CD8-positive, alpha-beta memory T cell (primary cell): ENCODE measurements at regions of chr17 and their contacts with region 1.

Region 1: DNA sequence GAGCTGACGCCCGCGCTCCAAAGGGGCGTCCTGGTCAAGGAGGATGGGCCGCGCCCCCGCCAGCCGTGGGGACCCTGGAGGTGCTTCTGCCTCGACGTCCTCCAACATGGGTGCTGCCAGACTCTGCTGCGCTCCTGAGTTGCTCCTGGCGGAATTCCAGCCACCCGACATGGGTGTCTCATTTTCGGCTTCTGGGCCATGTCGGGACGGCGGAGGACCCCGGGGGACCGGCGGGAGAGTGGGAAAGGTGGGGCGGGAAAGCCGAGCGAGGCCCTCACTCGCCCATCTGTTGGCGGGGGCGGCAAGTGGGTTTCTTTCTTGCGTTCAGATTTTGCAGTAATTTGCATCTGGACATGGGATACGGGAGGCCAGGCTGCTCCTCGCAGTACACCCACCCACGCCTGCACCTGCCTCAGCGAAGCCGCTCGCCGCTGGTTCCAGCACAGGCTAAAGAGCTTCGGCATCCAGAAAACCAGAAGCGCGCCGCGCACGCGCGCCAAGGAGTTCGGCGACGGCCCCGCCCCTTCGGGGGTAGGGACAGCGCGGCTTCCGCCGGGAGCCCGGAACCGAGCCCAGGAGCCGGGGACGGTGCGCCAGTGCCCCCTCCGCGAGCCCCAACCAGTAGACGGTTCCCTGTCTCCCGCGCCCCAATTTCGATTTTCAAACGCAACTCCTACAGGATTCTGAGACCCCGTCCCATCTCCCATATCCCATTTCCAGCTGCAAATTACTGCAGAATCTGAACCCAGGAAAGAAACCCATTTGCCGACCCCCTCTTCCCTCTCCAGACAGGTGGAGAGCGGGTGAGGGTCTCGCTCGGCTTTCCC is at the start of gene ARMC7:
- DNase-seq: peak; percentile 86 to 92 (median 88)
- H3K4me3 ChIP-seq: peak within 1 kb of the TSS; percentile 93
- H3K4me3 Mint-ChIP-seq: peak within 1 kb of the TSS; percentile 87 to 93 (median 91)
- H3K27ac ChIP-seq: peak within 1 kb of the TSS; percentile 59
- H3K27ac Mint-ChIP-seq: peak within 1 kb of the TSS; percentile 81 to 96 (median 91)
- H3K4me1 ChIP-seq: peaks cover 28% of the 10 kb centered on the region
- H3K4me1 Mint-ChIP-seq: peaks cover 29 to 42% (median 36%) of the 10 kb centered on the region in 3 donors
- H3K27me3 ChIP-seq: no peaks in the 10 kb centered on the region
- H3K27me3 Mint-ChIP-seq: no peaks in the 10 kb centered on the region
- total RNA-seq, gene ARMC7: 15.2 to 15.9 TPM

Region 2: DNA sequence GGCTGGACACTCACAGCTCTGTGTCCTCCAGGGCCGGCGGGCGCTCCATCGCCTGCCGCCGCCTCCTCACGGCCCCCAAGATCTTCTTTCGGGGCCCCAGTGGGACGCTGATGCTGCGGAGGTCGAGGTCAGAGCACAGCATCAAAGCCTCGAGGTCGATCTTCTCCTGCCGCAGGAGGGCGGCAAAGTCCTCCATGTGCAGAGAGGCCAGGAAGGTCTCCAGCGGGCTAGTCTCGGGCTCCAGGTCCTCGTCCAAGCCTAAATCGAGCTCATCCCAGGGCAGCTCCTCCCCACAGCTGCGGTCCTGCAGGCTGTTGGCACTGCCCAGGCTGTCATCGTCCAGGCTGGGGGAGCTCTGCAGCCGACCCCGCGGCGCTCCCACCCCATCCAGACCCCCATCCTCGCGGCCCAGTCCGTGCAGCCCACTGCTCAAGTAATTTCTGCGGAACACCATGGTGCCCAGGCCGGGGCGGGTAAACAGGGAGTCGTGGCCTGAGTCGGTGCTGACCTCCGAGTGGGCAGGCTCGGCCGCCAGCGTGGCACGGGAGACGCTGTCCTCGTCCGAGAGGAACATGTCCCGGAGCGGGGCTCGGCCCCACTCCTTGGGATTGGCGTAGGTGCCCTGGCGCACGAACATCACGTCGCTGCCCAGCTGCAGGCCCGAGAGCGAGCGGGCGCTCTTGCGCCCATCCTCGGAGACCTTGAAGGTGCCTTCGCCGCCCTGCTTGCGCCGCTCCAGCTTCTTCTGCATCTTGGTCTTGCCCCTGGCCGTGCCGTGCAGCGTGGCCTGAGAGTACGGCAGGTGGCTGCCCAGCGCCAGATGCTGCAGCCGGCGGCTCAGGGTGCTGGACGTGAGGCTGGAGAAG is 189.9 kb before region 1 on chr17:
- CTCF ChIA-PET with region 1: no interaction called
- POLR2A ChIA-PET with region 1: no interaction called
- DNase-seq: no peak
- H3K4me3 ChIP-seq: no peak overlapping the region
- H3K4me3 Mint-ChIP-seq: no peak overlapping the region
- H3K27ac ChIP-seq: no peak overlapping the region
- H3K27ac Mint-ChIP-seq: no peak overlapping the region
- H3K4me1 ChIP-seq: peaks cover 9% of the 10 kb centered on the region
- H3K4me1 Mint-ChIP-seq: peaks cover 0 to 24% (median 3%) of the 10 kb centered on the region in 3 donors
- H3K27me3 ChIP-seq: peaks cover 22% of the 10 kb centered on the region
- H3K27me3 Mint-ChIP-seq: peaks cover 22 to 55% of the 10 kb centered on the region in 2 donors

Region 3: GRCh38 chr17:75173526-75173925 is 63.9 kb after region 1 on chr17:
- CTCF ChIA-PET with region 1: interaction called, 194 read pairs
- POLR2A ChIA-PET with region 1: interaction called, 25 read pairs
- DNase-seq: no peak
- H3K4me3 ChIP-seq: no peak overlapping the region
- H3K4me3 Mint-ChIP-seq: no peak overlapping the region
- H3K27ac ChIP-seq: no peak overlapping the region
- H3K27ac Mint-ChIP-seq: peak overlapping the region in 3 of 8 donors; percentile 26 to 58 (median 29)
- H3K4me1 ChIP-seq: peaks cover 8% of the 10 kb centered on the region
- H3K4me1 Mint-ChIP-seq: peaks cover 14 to 28% (median 17%) of the 10 kb centered on the region in 3 donors
- H3K27me3 ChIP-seq: no peaks in the 10 kb centered on the region
- H3K27me3 Mint-ChIP-seq: no peaks in the 10 kb centered on the region

Region 4: DNA sequence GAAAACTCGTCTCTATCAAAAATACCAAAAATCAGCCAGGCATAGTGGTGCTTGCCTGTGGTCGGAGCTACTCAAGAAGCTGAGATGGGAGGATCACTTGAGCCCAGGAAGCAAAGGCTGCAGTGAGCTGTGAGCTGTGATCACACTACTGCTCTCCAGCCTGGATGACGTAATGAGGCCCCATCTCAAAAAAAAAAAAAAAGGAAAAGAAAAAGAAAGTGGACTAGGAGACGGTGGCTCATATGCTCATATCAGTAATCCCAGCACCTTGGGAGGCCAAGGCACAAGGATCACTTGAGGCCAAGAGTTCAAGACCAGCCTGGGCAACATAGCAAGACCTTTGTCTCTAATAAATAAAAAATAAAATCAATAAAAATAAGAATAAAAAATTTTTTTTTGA is 82.0 kb after region 1 on chr17:
- CTCF ChIA-PET with region 1: interaction called, 12 read pairs
- POLR2A ChIA-PET with region 1: no interaction called
- DNase-seq: no peak
- H3K4me3 ChIP-seq: no peak overlapping the region
- H3K4me3 Mint-ChIP-seq: no peak overlapping the region
- H3K27ac ChIP-seq: no peak overlapping the region
- H3K27ac Mint-ChIP-seq: no peak overlapping the region
- H3K4me1 ChIP-seq: no peaks in the 10 kb centered on the region
- H3K4me1 Mint-ChIP-seq: peaks cover 0 to 6% (median 5%) of the 10 kb centered on the region in 3 donors
- H3K27me3 ChIP-seq: no peaks in the 10 kb centered on the region
- H3K27me3 Mint-ChIP-seq: no peaks in the 10 kb centered on the region

Region 5: DNA sequence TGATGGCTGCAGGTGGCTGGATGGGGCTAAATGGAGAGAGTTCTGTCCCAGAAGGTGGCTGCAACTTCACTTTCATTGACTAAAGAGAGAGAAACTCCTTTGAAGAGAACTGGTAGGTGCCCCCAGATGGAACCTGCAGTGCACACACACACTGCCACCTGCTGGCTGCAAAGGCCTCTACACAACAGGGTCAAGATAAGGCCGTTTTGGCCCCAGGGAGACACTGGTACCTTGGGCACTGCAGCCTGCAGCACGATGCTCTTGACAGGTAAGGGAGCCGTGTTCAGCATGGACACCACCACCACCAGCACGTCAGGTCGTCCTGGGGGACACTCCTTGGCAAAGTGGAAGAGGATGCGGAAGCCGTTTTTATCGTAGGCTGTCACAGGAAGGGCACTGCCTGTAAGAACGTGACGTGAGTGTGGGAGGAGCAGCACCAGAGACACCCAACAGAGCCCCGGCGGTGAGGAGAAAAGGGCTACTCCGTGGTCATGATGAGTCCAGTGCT is 129.1 kb after region 1 on chr17:
- CTCF ChIA-PET with region 1: interaction called, 20 read pairs
- POLR2A ChIA-PET with region 1: interaction called, 3 read pairs
- DNase-seq: peak; percentile 38 to 68 (median 49)
- H3K4me3 ChIP-seq: no peak overlapping the region
- H3K4me3 Mint-ChIP-seq: peak overlapping the region in 6 of 7 donors; percentile 21 to 39 (median 36)
- H3K27ac ChIP-seq: no peak overlapping the region
- H3K27ac Mint-ChIP-seq: peak overlapping the region; percentile 58 to 97 (median 92)
- H3K4me1 ChIP-seq: peaks cover 29% of the 10 kb centered on the region
- H3K4me1 Mint-ChIP-seq: peaks cover 31 to 41% (median 31%) of the 10 kb centered on the region in 3 donors
- H3K27me3 ChIP-seq: no peaks in the 10 kb centered on the region
- H3K27me3 Mint-ChIP-seq: no peaks in the 10 kb centered on the region

Region 6: GRCh38 chr17:75271233-75271954 is 161.8 kb after region 1 on chr17:
- CTCF ChIA-PET with region 1: interaction called, 20 read pairs
- POLR2A ChIA-PET with region 1: interaction called, 6 read pairs
- DNase-seq: peak; percentile 83 to 92 (median 90)
- H3K4me3 ChIP-seq: peak overlapping the region; percentile 72
- H3K4me3 Mint-ChIP-seq: peak overlapping the region; percentile 77 to 92 (median 83)
- H3K27ac ChIP-seq: peak overlapping the region; percentile 89
- H3K27ac Mint-ChIP-seq: peak overlapping the region; percentile 72 to 94 (median 90)
- H3K4me1 ChIP-seq: peaks cover 19% of the 10 kb centered on the region
- H3K4me1 Mint-ChIP-seq: peaks cover 20 to 35% (median 23%) of the 10 kb centered on the region in 3 donors
- H3K27me3 ChIP-seq: no peaks in the 10 kb centered on the region
- H3K27me3 Mint-ChIP-seq: peaks cover 0 to 1% of the 10 kb centered on the region in 2 donors